B cell (primary cell): ENCODE measurements at regions of chr4 and their contacts with region 1.

Region 1: GRCh38 chr4:39638354-39639240 is at the start of gene SMIM14:
- DNase-seq: peak; percentile 93
- ATAC-seq: peak; percentile 80
- H3K4me3 ChIP-seq: peak within 1 kb of the TSS; percentile 79 to 98 (median 93)
- H3K4me3 Mint-ChIP-seq: peak within 1 kb of the TSS; percentile 91
- H3K27ac ChIP-seq: peak within 1 kb of the TSS; percentile 87 to 92
- H3K27ac Mint-ChIP-seq: peak within 1 kb of the TSS; percentile 91
- H3K4me1 ChIP-seq: peaks cover 39% of the 10 kb centered on the region in 2 donors
- H3K4me1 Mint-ChIP-seq: peaks cover 56% of the 10 kb centered on the region
- H3K27me3 ChIP-seq: no peaks in the 10 kb centered on the region
- H3K27me3 Mint-ChIP-seq: no peaks in the 10 kb centered on the region
- CTCF ChIP-seq: no peak
- total RNA-seq, gene SMIM14: 43.5 and 56.0 TPM in 2 replicates

Region 2: DNA sequence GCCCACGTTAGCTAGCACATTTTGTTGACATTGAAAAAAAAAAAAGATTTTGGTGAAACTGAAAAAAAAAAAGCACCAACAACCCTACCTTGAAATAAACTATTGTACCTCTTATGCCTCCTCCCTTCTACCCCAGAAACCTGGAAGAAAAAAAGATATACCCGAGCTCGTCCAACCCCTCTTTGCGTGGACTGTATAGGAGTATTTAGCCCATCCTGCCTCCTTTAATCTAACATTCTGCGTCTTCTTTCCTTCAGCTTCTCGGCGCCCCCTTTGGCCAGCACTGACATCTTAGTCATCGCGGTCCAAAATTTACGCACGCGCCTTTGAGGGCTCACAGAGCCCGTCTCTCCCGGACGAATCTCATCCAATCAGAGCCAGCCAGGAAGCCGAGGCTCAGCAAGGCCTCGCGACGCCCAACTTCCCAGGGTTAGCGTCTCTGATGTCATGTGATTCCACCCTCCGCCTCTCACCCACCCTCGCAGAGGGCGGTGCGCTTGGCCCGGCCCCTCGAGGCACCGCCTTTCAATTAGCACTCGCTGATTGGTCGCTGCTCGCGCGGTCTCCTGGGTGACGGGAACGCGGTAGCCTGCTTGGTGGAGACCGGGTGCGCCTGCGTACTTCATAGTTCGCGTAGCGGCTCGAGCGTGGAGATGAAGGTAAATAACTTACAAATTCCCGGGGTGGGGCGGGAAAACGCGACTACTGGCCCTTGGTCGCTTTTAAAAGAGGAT is 456.5 kb before region 1 on chr4 and contains the start of gene WDR19:
- CTCF ChIA-PET with region 1: no interaction called
- POLR2A ChIA-PET with region 1: no interaction called
- intact Hi-C with region 1: no loop called
- DNase-seq: peak; percentile 99
- ATAC-seq: peak; percentile 96
- H3K4me3 ChIP-seq: peak within 1 kb of the TSS; percentile 76 to 99 (median 94)
- H3K4me3 Mint-ChIP-seq: peak within 1 kb of the TSS; percentile 47
- H3K27ac ChIP-seq: peak within 1 kb of the TSS; percentile 12 to 79
- H3K27ac Mint-ChIP-seq: no peak within 1 kb of the TSS
- H3K4me1 ChIP-seq: peaks cover 12 to 16% of the 10 kb centered on the region in 2 donors
- H3K4me1 Mint-ChIP-seq: peaks cover 8% of the 10 kb centered on the region
- H3K27me3 ChIP-seq: no peaks in the 10 kb centered on the region
- H3K27me3 Mint-ChIP-seq: no peaks in the 10 kb centered on the region
- CTCF ChIP-seq: peak; percentile 73
- total RNA-seq, gene WDR19: 79.8 and 83.2 TPM in 2 replicates

Region 3: DNA sequence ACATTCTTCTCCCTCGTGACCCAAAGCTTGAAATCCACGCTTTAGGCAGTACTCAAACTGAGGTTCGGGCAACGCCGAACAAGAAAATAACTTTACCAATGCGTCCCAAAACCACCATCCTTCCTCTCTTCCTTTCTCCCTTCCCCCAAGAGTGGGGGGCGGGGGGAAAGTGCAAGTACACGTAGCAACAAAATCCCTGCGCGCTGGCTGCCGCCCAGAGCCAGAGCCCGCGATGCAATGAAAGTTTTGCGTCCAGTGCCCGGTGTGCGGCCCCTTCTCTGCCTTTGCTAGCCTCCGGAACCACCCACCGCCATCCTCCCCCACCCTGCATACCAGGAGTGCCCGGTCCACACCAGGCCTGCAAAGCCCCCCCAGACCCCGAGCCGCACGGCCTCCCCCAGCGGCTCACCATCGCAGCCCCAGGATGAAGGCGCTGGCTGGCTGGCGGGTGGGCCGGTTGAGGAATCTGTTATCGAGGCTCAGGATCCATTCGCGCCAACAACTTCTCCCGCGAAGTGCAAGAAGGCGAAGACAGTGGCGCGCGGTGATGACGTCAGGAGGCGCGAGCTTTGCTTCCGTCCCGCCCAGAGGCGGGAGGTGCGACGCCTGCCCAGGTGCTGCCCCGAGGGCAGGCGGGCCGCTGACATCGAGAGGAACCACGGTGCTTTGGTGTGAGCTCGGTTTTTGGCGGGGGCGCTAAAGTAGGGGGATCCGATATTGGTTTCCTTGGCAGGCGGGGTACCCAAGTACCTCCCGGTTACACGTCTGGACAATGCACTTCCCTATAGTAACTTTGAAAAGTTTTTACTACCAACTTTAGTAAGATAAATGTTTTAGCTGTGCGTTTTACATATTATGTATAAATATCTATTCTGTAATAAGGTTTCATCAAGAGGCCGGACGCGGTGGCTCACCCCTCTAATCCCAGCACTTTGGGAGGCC is 272.5 kb before region 1 on chr4 and contains the start of gene RFC1:
- CTCF ChIA-PET with region 1: no interaction called
- POLR2A ChIA-PET with region 1: no interaction called
- intact Hi-C with region 1: loop called (anchors 10 kb)
- DNase-seq: peak; percentile 96
- ATAC-seq: peak; percentile 95
- H3K4me3 ChIP-seq: peak within 1 kb of the TSS; percentile 73 to 98 (median 94)
- H3K4me3 Mint-ChIP-seq: peak within 1 kb of the TSS; percentile 94
- H3K27ac ChIP-seq: peak within 1 kb of the TSS; percentile 65 to 84
- H3K27ac Mint-ChIP-seq: peak within 1 kb of the TSS; percentile 98
- H3K4me1 ChIP-seq: peaks cover 24 to 32% of the 10 kb centered on the region in 2 donors
- H3K4me1 Mint-ChIP-seq: peaks cover 31% of the 10 kb centered on the region
- H3K27me3 ChIP-seq: no peaks in the 10 kb centered on the region
- H3K27me3 Mint-ChIP-seq: no peaks in the 10 kb centered on the region
- CTCF ChIP-seq: no peak
- total RNA-seq, gene RFC1: 55.1 and 66.5 TPM in 2 replicates

Region 4: DNA sequence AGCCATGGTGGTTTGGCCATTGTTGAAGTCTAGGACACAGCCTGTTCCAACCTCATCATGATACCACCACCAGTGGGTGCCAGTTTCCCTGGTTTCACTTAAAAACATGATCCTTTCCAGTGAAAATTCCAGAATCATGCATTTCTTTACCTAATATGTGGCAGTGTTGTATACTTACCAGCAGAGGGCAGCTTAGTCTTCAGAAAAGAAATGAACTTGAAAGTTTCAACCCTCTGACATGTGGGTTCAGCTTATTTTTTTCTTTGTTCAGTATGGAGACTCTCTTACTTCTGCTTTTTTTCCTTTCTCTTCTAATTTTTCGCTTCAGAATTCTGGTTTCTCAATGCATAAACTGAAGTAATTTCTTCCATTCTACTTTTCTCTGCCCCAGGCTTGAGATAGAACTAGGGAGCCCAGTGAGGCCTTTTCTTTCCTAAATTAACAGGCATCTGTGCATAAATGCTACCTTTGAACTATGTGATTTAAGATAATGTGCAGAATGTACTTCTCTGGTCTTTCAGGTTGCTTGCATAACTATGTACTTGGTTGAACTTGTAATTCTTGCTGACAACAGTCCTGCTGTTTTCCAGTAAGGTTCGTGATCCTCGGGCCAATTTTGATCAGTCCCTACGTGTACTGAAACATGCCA is 169.0 kb before region 1 on chr4:
- CTCF ChIA-PET with region 1: interaction called, 40 read pairs
- POLR2A ChIA-PET with region 1: interaction called, 11 read pairs
- intact Hi-C with region 1: loop called (anchors 2 kb)
- DNase-seq: peak; percentile 81
- ATAC-seq: peak; percentile 99
- H3K4me3 ChIP-seq: peak overlapping the region in 1 of 5 experiments; percentile 14
- H3K4me3 Mint-ChIP-seq: peak overlapping the region; percentile 59
- H3K27ac ChIP-seq: peak overlapping the region; percentile 36 to 68
- H3K27ac Mint-ChIP-seq: peak overlapping the region; percentile 92
- H3K4me1 ChIP-seq: peaks cover 5 to 7% of the 10 kb centered on the region in 2 donors
- H3K4me1 Mint-ChIP-seq: peaks cover 9% of the 10 kb centered on the region
- H3K27me3 ChIP-seq: no peaks in the 10 kb centered on the region
- H3K27me3 Mint-ChIP-seq: no peaks in the 10 kb centered on the region
- CTCF ChIP-seq: peak; percentile 87

Region 5: GRCh38 chr4:39568815-39569608 is 69.6 kb before region 1 on chr4:
- CTCF ChIA-PET with region 1: interaction called, 5 read pairs
- POLR2A ChIA-PET with region 1: interaction called, 6 read pairs
- intact Hi-C with region 1: loop called (anchors 1 kb)
- DNase-seq: peak; percentile 55
- ATAC-seq: peak; percentile 67
- H3K4me3 ChIP-seq: peak overlapping the region in 4 of 5 experiments; percentile 0 to 19 (median 4)
- H3K4me3 Mint-ChIP-seq: peak overlapping the region; percentile 83
- H3K27ac ChIP-seq: peak overlapping the region; percentile 44 to 75
- H3K27ac Mint-ChIP-seq: peak overlapping the region; percentile 83
- H3K4me1 ChIP-seq: peaks cover 10 to 17% of the 10 kb centered on the region in 2 donors
- H3K4me1 Mint-ChIP-seq: peaks cover 32% of the 10 kb centered on the region
- H3K27me3 ChIP-seq: no peaks in the 10 kb centered on the region
- H3K27me3 Mint-ChIP-seq: no peaks in the 10 kb centered on the region
- CTCF ChIP-seq: no peak

Region 6: DNA sequence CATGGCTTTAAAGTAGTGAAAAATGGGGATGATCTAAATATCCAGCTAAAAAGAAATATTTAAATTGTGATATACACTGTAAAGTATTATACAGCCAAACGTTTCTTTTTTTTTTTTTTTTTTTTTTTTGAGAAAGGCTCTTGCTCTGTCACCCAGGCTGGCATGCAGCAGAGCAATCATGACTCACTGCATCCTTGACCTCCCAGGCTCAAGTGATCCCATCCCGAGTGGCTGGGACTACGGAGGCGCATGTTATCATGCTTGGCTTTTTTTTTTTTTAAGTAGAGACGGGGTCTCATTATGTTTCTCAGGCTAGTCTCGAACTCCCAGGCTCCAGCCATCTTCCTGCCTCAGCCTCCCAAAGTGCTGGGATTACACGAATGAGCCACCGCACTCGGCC is 17.0 kb before region 1 on chr4:
- CTCF ChIA-PET with region 1: interaction called, 27 read pairs
- POLR2A ChIA-PET with region 1: interaction called, 18 read pairs
- intact Hi-C with region 1: loop called (anchors 1 kb)
- DNase-seq: no peak
- ATAC-seq: no peak
- H3K4me3 ChIP-seq: no peak overlapping the region
- H3K4me3 Mint-ChIP-seq: no peak overlapping the region
- H3K27ac ChIP-seq: peak overlapping the region in 1 of 2 donors; percentile 48
- H3K27ac Mint-ChIP-seq: peak overlapping the region; percentile 17
- H3K4me1 ChIP-seq: peaks cover 47 to 55% of the 10 kb centered on the region in 2 donors
- H3K4me1 Mint-ChIP-seq: peaks cover 64% of the 10 kb centered on the region
- H3K27me3 ChIP-seq: no peaks in the 10 kb centered on the region
- H3K27me3 Mint-ChIP-seq: no peaks in the 10 kb centered on the region
- CTCF ChIP-seq: no peak

Region 7: DNA sequence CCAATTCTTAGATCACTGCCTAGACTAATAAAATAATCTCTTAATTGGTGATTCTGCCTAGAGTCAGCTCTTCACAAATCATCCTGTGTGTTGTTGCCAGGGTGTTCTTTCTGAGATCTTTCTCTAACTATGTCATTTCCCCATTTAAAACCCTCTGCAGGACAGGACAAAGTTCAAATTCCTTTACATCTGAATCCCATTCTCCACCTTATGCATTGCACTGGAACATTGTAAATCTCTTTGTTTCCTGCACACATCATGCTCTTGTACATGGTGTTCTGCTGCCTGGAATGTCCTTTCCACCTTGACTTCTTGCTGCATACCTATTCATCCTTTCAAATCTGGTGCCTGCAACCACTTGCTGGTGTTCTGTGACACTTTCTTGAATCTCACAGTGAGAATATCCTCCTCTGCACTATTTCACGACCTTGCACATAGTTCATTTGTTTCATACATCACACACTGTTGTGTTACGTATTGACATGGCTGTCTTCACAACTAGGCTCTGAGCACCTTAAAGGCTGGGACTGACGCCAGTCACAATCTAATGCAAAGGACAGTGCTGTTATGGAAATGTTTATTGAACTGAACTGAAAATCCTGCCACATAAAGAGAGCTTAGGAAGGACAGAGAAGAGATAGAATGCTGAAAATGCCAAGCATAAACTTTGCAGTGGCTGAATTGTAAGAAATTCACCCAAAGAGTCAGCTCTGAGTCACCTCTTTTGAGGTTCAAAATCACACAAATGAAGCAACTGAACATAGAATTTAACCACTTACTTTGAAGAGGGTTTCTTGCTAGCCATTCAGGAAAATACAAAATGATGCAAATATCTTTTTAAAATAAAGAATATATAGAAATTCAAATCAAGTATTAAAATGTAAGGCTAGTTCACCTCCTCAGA is 26.5 kb after region 1 on chr4:
- CTCF ChIA-PET with region 1: no interaction called
- POLR2A ChIA-PET with region 1: no interaction called
- intact Hi-C with region 1: no loop called
- DNase-seq: no peak
- ATAC-seq: no peak
- H3K4me3 ChIP-seq: no peak overlapping the region
- H3K4me3 Mint-ChIP-seq: no peak overlapping the region
- H3K27ac ChIP-seq: no peak overlapping the region
- H3K27ac Mint-ChIP-seq: no peak overlapping the region
- H3K4me1 ChIP-seq: no peaks in the 10 kb centered on the region
- H3K4me1 Mint-ChIP-seq: no peaks in the 10 kb centered on the region
- H3K27me3 ChIP-seq: no peaks in the 10 kb centered on the region
- H3K27me3 Mint-ChIP-seq: no peaks in the 10 kb centered on the region
- CTCF ChIP-seq: no peak

Region 8: DNA sequence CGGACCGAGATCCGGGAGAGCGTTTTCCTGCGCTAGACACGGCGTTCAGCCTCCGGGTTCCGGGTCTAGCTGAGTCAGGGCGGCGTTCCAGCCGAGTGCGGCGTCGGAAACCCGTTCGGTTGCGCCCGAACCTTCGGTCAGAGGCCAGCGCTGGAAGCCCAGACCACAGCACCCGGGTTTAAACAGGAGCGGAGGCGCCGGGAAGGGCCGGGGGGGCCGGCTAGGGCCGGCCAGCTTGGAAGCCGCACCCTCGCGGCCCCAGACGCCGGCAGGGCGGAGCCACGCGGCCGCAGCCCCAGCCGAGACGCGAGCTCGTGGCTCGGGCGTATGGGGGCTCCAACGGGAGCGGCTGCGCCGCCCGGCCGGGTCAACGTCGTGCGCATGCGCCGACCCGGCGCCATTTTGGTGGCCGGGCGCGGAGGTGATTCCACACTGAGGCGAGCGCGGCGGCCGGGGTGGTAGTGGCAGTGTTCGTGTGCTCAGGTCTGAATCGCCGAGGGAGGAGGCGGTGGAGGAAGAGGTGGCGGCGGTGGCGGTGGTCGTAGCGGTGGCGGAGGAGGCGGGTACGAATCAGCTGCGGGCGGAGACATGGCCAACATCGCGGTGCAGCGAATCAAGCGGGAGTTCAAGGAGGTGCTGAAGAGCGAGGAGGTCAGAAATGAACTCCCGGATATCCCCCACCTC is 59.3 kb after region 1 on chr4 and contains the start of gene UBE2K:
- CTCF ChIA-PET with region 1: interaction called, 4 read pairs
- POLR2A ChIA-PET with region 1: interaction called, 11 read pairs
- intact Hi-C with region 1: loop called (anchors 1 kb)
- DNase-seq: peak; percentile 94
- ATAC-seq: peak; percentile 92
- H3K4me3 ChIP-seq: peak within 1 kb of the TSS; percentile 74 to 98 (median 96)
- H3K4me3 Mint-ChIP-seq: peak within 1 kb of the TSS; percentile 100
- H3K27ac ChIP-seq: peak within 1 kb of the TSS; percentile 87 to 90
- H3K27ac Mint-ChIP-seq: peak within 1 kb of the TSS; percentile 99
- H3K4me1 ChIP-seq: peaks cover 23 to 29% of the 10 kb centered on the region in 2 donors
- H3K4me1 Mint-ChIP-seq: peaks cover 41% of the 10 kb centered on the region
- H3K27me3 ChIP-seq: no peaks in the 10 kb centered on the region
- H3K27me3 Mint-ChIP-seq: no peaks in the 10 kb centered on the region
- CTCF ChIP-seq: no peak
- total RNA-seq, gene UBE2K: 46.3 and 51.0 TPM in 2 replicates